Stomach (tissue), 19 donors: ENCODE measurements at regions of chr17 and their contacts with region 1.

Region 1: DNA sequence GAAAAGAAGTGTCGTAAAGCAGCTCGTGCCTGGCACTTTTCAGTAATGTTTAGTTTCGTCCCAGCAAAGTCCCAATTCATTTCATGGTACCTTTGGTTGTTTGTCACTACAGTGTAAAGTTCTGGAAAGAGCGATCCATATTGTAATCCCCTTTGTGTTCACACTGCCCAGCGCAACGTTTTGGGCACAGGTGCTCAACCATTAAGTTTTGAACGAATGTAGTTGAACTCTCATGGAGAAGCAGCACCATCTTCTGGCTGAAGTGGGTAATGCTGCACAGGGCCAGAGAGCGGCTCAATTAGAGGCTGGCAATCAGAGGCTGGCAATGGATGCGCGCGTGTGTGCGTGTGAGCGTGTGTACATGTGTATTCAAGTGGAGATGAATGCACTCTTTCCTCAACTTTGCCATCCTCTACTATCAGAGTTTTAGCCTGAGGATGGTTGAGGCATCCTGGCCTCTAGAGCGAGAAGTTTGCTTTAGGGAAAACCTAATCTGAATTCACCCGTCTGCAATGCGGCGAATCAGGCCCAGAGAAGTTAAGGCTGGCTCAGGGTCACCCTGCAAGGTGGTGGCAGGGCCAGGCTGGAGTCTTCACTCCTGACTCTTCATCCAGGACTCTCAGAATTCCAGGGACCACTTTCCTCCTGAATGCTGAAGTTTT is 29.9 kb downstream of the DYNLL2 start:
- DNase-seq: peak; percentile 86 to 88
- H3K4me3 ChIP-seq: no peak overlapping the region
- H3K27ac ChIP-seq: no peak overlapping the region
- H3K4me1 ChIP-seq: no peaks in the 10 kb centered on the region
- H3K27me3 ChIP-seq: peaks cover 0 to 24% (median 3%) of the 10 kb centered on the region in 3 donors
- CTCF ChIP-seq: peak in 5 of 7 experiments; percentile 80 to 98 (median 95)
- EP300 ChIP-seq: no peak
- POLR2A ChIP-seq: no peak

Region 2: GRCh38 chr17:57849874-57850754 is 263.0 kb before region 1 on chr17 and contains the start of gene MRPS23:
- intact Hi-C with region 1: loop called (anchors 10 kb)
- DNase-seq: peak; percentile 98 to 99
- H3K4me3 ChIP-seq: peak within 1 kb of the TSS; percentile 75 to 94 (median 89)
- H3K27ac ChIP-seq: peak within 1 kb of the TSS; percentile 92 to 97 (median 95)
- H3K4me1 ChIP-seq: peaks cover 54 to 80% (median 65%) of the 10 kb centered on the region in 4 donors
- H3K27me3 ChIP-seq: no peaks in the 10 kb centered on the region
- CTCF ChIP-seq: peak in 1 of 7 experiments; percentile 23
- EP300 ChIP-seq: no peak
- POLR2A ChIP-seq: peak in 1 of 4 donors; percentile 4
- total RNA-seq, gene MRPS23: 12.6 to 26.8 (median 16.8) TPM in 4 of 5 donors, not detected in the other

Region 3: GRCh38 chr17:58019039-58019438 is 94.1 kb before region 1 on chr17:
- intact Hi-C with region 1: loop called (anchors 10 kb)
- DNase-seq: no peak
- H3K4me3 ChIP-seq: no peak overlapping the region
- H3K27ac ChIP-seq: no peak overlapping the region
- H3K4me1 ChIP-seq: no peaks in the 10 kb centered on the region
- H3K27me3 ChIP-seq: no peaks in the 10 kb centered on the region
- CTCF ChIP-seq: no peak
- EP300 ChIP-seq: no peak
- POLR2A ChIP-seq: no peak

Region 4: GRCh38 chr17:58643140-58643539 is 530.0 kb after region 1 on chr17:
- intact Hi-C with region 1: loop called (anchors 10 kb)
- DNase-seq: no peak
- H3K4me3 ChIP-seq: no peak overlapping the region
- H3K27ac ChIP-seq: no peak overlapping the region
- H3K4me1 ChIP-seq: peaks cover 0 to 3% (median 0%) of the 10 kb centered on the region in 4 donors
- H3K27me3 ChIP-seq: no peaks in the 10 kb centered on the region
- CTCF ChIP-seq: no peak
- EP300 ChIP-seq: no peak
- POLR2A ChIP-seq: no peak